Breast epithelium (tissue), 4 donors: ENCODE measurements at regions of chr12 and their contacts with region 1.

Region 1: GRCh38 chr12:100077367-100077766 is 65.3 kb downstream of the BLTP3B start:
- DNase-seq: no peak
- H3K4me3 ChIP-seq: no peak overlapping the region
- H3K27ac ChIP-seq: no peak overlapping the region
- H3K4me1 ChIP-seq: no peaks in the 10 kb centered on the region
- H3K27me3 ChIP-seq: no peaks in the 10 kb centered on the region
- CTCF ChIP-seq: no peak
- POLR2A ChIP-seq: no peak

Region 2: DNA sequence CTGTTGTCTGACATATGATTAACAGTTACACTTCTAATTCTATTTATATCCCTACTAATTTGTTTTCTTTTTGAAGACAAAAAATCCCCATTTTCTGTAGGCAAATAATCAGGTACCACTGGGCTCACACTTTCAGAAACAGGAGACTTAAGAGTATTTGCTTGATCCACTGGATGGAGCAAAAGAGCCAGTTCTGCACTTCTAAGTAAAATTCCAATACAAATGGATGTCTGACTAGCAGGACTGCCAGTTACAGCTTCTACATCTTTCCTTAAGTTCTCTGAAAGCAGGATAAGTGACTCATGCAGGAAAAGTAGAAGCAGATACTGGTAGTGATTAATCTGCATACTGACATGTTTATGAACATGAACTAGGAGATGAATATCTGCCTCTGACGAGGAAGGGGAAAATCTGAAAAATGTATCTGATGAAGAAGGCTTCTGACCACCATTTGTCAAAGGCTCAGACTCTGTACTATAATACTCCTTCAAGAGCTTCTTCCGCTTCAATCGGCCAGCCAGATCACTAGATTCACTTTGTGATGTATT is 18.8 kb before region 1 on chr12:
- intact Hi-C with region 1: no loop called
- DNase-seq: no peak
- H3K4me3 ChIP-seq: no peak overlapping the region
- H3K27ac ChIP-seq: no peak overlapping the region
- H3K4me1 ChIP-seq: no peaks in the 10 kb centered on the region
- H3K27me3 ChIP-seq: no peaks in the 10 kb centered on the region
- CTCF ChIP-seq: no peak
- POLR2A ChIP-seq: no peak

Region 3: GRCh38 chr12:100163416-100164152 is 86.2 kb after region 1 on chr12:
- intact Hi-C with region 1: no loop called
- DNase-seq: peak; percentile 70 to 81
- H3K4me3 ChIP-seq: peak overlapping the region in 2 of 3 donors; percentile 32 to 55
- H3K27ac ChIP-seq: no peak overlapping the region
- H3K4me1 ChIP-seq: peaks cover 0 to 4% of the 10 kb centered on the region in 2 donors
- H3K27me3 ChIP-seq: no peaks in the 10 kb centered on the region
- CTCF ChIP-seq: no peak
- POLR2A ChIP-seq: no peak

Region 4: DNA sequence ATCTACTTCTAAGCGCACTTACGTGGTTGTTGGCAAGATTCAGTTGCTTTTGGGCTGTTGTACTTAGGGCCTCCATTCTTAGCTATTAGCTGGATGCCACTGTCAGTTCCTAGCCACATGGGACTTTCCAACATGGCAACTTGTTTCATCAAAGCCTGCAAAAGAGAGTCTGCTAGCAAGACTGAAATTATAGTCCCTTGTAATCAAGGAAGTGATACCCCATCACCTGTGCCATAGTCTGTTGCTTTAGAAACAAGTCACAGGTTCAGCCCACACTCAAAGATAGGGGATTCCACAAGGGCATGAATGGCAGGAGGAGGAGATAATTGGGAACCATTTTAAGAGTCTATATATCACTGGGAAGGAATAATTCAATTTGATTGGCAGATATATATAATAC is 252.4 kb after region 1 on chr12:
- intact Hi-C with region 1: loop called (anchors 10 kb)
- DNase-seq: no peak
- H3K4me3 ChIP-seq: no peak overlapping the region
- H3K27ac ChIP-seq: no peak overlapping the region
- H3K4me1 ChIP-seq: no peaks in the 10 kb centered on the region
- H3K27me3 ChIP-seq: no peaks in the 10 kb centered on the region
- CTCF ChIP-seq: no peak
- POLR2A ChIP-seq: no peak

Region 5: DNA sequence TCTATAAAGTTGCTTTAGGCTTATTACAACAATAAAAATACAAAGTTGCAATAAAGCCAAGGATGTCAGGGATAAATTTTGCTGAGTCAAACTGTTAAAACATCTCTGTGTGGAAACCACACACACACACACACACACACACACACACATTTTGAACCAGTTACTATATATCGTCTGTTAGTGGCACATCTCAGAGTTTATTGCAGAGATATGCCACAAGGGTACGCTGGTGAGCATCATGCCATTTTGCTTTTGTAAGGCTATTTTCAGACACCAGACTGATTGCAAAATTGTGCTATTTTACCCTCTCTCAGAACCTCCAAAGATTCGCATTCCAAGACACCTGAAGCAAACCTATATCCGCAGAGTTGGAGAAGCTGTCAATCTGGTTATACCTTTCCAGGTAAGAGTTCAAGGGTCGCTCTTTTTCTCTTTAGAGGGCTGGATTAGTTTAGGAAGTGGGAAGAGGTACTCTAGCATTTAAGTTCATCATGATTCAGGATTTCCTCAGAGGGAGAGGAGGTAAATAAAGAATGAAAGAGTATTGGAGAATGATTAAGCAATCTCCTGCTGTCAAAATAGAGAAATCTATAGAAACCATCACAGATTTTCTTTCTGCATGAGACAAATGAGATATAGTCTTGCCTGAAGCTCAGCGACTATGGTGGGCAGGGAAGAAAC is 1592.8 kb after region 1 on chr12:
- intact Hi-C with region 1: loop called (anchors 5 kb)
- DNase-seq: no peak
- H3K4me3 ChIP-seq: no peak overlapping the region
- H3K27ac ChIP-seq: no peak overlapping the region
- H3K4me1 ChIP-seq: no peaks in the 10 kb centered on the region
- H3K27me3 ChIP-seq: no peaks in the 10 kb centered on the region
- CTCF ChIP-seq: peak in 2 of 3 donors; percentile 11 to 42
- POLR2A ChIP-seq: no peak